ENCODE measurements at regions of chr14 and their contacts with region 1.

Region 1: GRCh38 chr14:59483900-59484638 is at the starts of genes JKAMP and L3HYPDH:
- DNase-seq: peak; percentile 93 to 99 (median 97)
- ATAC-seq: peak; percentile 95
- H3K4me3 ChIP-seq: peak within 1 kb of the TSS; percentile 94 to 99
- H3K4me3 Mint-ChIP-seq: peak within 1 kb of the TSS; percentile 96
- H3K27ac ChIP-seq: peak within 1 kb of the TSS; percentile 77 to 89
- H3K27ac Mint-ChIP-seq: peak within 1 kb of the TSS; percentile 88
- H3K4me1 ChIP-seq: peaks cover 46% of the 10 kb centered on the region
- H3K4me1 Mint-ChIP-seq: peaks cover 76% of the 10 kb centered on the region
- H3K27me3 ChIP-seq: no peaks in the 10 kb centered on the region
- H3K27me3 Mint-ChIP-seq: no peaks in the 10 kb centered on the region
- CTCF ChIP-seq: no peak
- total RNA-seq, gene JKAMP: 9.1 to 10.5 TPM
- total RNA-seq, gene L3HYPDH: 8.4 to 8.7 TPM

Region 2: DNA sequence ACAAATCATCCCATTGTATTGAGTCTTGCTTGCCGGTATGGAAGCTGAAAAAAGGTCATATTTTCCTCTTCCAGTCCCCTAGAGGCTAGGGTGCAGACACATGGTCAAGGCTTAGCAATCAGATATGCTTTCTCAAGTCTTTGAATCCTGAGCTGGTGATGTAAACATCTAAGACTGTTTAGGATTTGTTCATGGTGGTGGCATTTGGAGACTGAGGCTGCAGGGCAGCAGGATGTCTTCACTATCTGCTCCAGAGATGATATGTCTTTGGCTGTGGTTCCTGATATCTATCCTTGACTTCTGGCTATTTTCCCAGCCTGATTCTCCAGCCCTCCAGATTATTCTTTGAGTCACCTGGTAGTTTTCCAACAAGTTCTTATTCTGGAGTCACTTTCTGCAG is 896.8 kb before region 1 on chr14:
- CTCF ChIA-PET with region 1: no interaction called
- POLR2A ChIA-PET with region 1: no interaction called
- intact Hi-C with region 1: no loop called
- DNase-seq: no peak
- ATAC-seq: no peak
- H3K4me3 ChIP-seq: no peak overlapping the region
- H3K4me3 Mint-ChIP-seq: no peak overlapping the region
- H3K27ac ChIP-seq: no peak overlapping the region
- H3K27ac Mint-ChIP-seq: no peak overlapping the region
- H3K4me1 ChIP-seq: no peaks in the 10 kb centered on the region
- H3K4me1 Mint-ChIP-seq: no peaks in the 10 kb centered on the region
- H3K27me3 ChIP-seq: peaks cover 0 to 4% of the 10 kb centered on the region in 2 experiments
- H3K27me3 Mint-ChIP-seq: peaks cover 14% of the 10 kb centered on the region
- CTCF ChIP-seq: no peak

Region 3: GRCh38 chr14:59419303-59419702 is 64.8 kb before region 1 on chr14:
- CTCF ChIA-PET with region 1: no interaction called
- POLR2A ChIA-PET with region 1: no interaction called
- intact Hi-C with region 1: no loop called
- DNase-seq: no peak
- ATAC-seq: no peak
- H3K4me3 ChIP-seq: no peak overlapping the region
- H3K4me3 Mint-ChIP-seq: no peak overlapping the region
- H3K27ac ChIP-seq: no peak overlapping the region
- H3K27ac Mint-ChIP-seq: no peak overlapping the region
- H3K4me1 ChIP-seq: no peaks in the 10 kb centered on the region
- H3K4me1 Mint-ChIP-seq: no peaks in the 10 kb centered on the region
- H3K27me3 ChIP-seq: no peaks in the 10 kb centered on the region
- H3K27me3 Mint-ChIP-seq: no peaks in the 10 kb centered on the region
- CTCF ChIP-seq: no peak

Region 4: GRCh38 chr14:59464486-59465315 is 19.4 kb before region 1 on chr14:
- CTCF ChIA-PET with region 1: interaction called, 5 read pairs
- POLR2A ChIA-PET with region 1: interaction called, 29 read pairs
- intact Hi-C with region 1: loop called (anchors 1 kb)
- DNase-seq: peak; percentile 15 to 77 (median 55)
- ATAC-seq: peak; percentile 69
- H3K4me3 ChIP-seq: peak overlapping the region; percentile 50 to 56
- H3K4me3 Mint-ChIP-seq: peak overlapping the region; percentile 90
- H3K27ac ChIP-seq: peak overlapping the region in 1 of 2 experiments; percentile 42
- H3K27ac Mint-ChIP-seq: peak overlapping the region; percentile 58
- H3K4me1 ChIP-seq: peaks cover 9% of the 10 kb centered on the region
- H3K4me1 Mint-ChIP-seq: peaks cover 11% of the 10 kb centered on the region
- H3K27me3 ChIP-seq: no peaks in the 10 kb centered on the region
- H3K27me3 Mint-ChIP-seq: peaks cover 5% of the 10 kb centered on the region
- CTCF ChIP-seq: no peak

Region 5: GRCh38 chr14:59529189-59529588 is 45.1 kb after region 1 on chr14:
- CTCF ChIA-PET with region 1: no interaction called
- POLR2A ChIA-PET with region 1: no interaction called
- intact Hi-C with region 1: no loop called
- DNase-seq: no peak
- ATAC-seq: no peak
- H3K4me3 ChIP-seq: no peak overlapping the region
- H3K4me3 Mint-ChIP-seq: no peak overlapping the region
- H3K27ac ChIP-seq: no peak overlapping the region
- H3K27ac Mint-ChIP-seq: no peak overlapping the region
- H3K4me1 ChIP-seq: no peaks in the 10 kb centered on the region
- H3K4me1 Mint-ChIP-seq: no peaks in the 10 kb centered on the region
- H3K27me3 ChIP-seq: no peaks in the 10 kb centered on the region
- H3K27me3 Mint-ChIP-seq: peaks cover 18% of the 10 kb centered on the region
- CTCF ChIP-seq: no peak

Region 6: DNA sequence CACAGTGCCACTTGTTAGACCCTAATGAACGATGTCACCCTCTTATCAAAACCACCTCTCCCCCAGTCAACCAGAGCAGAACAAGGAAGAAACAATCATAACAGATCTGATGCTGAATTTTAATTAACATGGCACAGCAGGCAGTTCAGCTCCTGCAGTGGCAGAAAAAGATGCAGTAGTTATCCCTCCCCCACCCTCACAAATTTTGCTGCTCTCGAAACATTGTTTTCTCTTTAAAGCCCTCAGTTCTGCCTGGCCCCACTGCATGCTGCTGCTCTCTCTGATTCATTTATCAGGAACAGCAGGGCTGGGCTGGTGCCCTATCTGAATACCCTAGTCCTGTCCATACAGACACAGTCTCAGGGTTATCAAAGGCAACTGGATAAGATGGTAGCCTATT is 80.3 kb after region 1 on chr14:
- CTCF ChIA-PET with region 1: no interaction called
- POLR2A ChIA-PET with region 1: no interaction called
- intact Hi-C with region 1: no loop called
- DNase-seq: no peak
- ATAC-seq: no peak
- H3K4me3 ChIP-seq: no peak overlapping the region
- H3K4me3 Mint-ChIP-seq: no peak overlapping the region
- H3K27ac ChIP-seq: no peak overlapping the region
- H3K27ac Mint-ChIP-seq: no peak overlapping the region
- H3K4me1 ChIP-seq: no peaks in the 10 kb centered on the region
- H3K4me1 Mint-ChIP-seq: no peaks in the 10 kb centered on the region
- H3K27me3 ChIP-seq: peaks cover 0 to 3% of the 10 kb centered on the region in 2 experiments
- H3K27me3 Mint-ChIP-seq: peaks cover 10% of the 10 kb centered on the region
- CTCF ChIP-seq: no peak

Region 7: DNA sequence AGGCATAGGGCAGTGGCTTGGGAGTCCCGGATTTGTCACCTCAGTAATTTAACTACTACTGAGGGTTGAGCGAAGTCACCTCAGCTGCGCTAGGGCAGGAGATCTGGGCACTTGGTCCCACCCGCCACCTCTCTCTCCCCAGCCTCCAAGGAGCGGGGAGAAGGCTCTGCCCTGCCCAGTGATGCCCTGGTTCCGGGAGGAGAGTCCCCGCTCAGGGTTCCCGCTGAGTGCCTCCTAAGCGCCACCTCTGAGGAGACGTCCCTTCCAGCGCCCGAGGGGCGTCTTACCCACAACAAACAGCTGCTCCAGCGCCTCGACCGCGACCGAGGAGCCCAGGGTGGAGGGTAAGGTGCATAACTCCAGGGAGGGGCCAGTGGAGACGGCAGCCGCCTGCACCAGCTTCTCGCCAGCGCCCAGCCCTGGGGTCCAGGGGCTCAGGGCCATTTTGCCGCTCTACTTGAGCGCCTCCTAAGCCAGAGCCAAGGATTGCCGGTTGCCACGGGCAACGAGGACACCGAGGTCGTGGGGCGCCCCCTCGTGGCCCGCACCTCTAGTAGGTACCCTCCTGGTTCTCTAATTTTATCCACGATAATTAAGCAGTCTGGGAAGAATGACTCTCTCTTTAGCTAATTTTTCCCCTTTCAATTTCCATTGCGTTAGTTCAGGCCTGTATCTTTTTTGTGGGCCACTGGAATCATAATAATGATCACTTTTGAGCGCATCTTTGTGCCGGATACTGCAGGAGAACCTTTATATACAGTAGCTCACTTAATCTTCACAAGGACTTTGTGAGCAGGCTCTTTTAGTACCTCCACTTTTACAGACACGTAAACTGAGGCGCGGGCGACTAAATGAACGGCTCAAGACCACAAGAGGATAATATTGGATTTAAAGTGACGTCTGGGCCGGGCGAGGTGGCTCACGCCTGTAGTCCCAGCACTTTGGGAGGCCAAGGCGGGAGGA is 92.5 kb after region 1 on chr14 and contains the start of gene CCDC175:
- CTCF ChIA-PET with region 1: interaction called, 3 read pairs
- POLR2A ChIA-PET with region 1: interaction called, 3 read pairs
- intact Hi-C with region 1: loop called in 1 of 2 experiments (anchors 2 kb)
- DNase-seq: peak; percentile 50 to 89 (median 82)
- ATAC-seq: peak; percentile 98
- H3K4me3 ChIP-seq: peak within 1 kb of the TSS; percentile 55 to 58
- H3K4me3 Mint-ChIP-seq: peak within 1 kb of the TSS; percentile 72
- H3K27ac ChIP-seq: no peak within 1 kb of the TSS
- H3K27ac Mint-ChIP-seq: no peak within 1 kb of the TSS
- H3K4me1 ChIP-seq: peaks cover 9% of the 10 kb centered on the region
- H3K4me1 Mint-ChIP-seq: peaks cover 10% of the 10 kb centered on the region
- H3K27me3 ChIP-seq: peaks cover 0 to 4% of the 10 kb centered on the region in 2 experiments
- H3K27me3 Mint-ChIP-seq: peaks cover 27% of the 10 kb centered on the region
- CTCF ChIP-seq: peak; percentile 85
- total RNA-seq, gene CCDC175: not detected

Region 8: GRCh38 chr14:59964251-59965007 is 480.4 kb after region 1 on chr14:
- CTCF ChIA-PET with region 1: no interaction called
- POLR2A ChIA-PET with region 1: no interaction called
- intact Hi-C with region 1: loop called (anchors 5 to 10 kb)
- DNase-seq: peak in 2 of 9 experiments; percentile 24 to 47
- ATAC-seq: peak; percentile 34
- H3K4me3 ChIP-seq: peak overlapping the region in 1 of 2 experiments; percentile 52
- H3K4me3 Mint-ChIP-seq: peak overlapping the region; percentile 88
- H3K27ac ChIP-seq: no peak overlapping the region
- H3K27ac Mint-ChIP-seq: peak overlapping the region; percentile 95
- H3K4me1 ChIP-seq: peaks cover 12% of the 10 kb centered on the region
- H3K4me1 Mint-ChIP-seq: peaks cover 18% of the 10 kb centered on the region
- H3K27me3 ChIP-seq: no peaks in the 10 kb centered on the region
- H3K27me3 Mint-ChIP-seq: no peaks in the 10 kb centered on the region
- CTCF ChIP-seq: no peak

Region 9: DNA sequence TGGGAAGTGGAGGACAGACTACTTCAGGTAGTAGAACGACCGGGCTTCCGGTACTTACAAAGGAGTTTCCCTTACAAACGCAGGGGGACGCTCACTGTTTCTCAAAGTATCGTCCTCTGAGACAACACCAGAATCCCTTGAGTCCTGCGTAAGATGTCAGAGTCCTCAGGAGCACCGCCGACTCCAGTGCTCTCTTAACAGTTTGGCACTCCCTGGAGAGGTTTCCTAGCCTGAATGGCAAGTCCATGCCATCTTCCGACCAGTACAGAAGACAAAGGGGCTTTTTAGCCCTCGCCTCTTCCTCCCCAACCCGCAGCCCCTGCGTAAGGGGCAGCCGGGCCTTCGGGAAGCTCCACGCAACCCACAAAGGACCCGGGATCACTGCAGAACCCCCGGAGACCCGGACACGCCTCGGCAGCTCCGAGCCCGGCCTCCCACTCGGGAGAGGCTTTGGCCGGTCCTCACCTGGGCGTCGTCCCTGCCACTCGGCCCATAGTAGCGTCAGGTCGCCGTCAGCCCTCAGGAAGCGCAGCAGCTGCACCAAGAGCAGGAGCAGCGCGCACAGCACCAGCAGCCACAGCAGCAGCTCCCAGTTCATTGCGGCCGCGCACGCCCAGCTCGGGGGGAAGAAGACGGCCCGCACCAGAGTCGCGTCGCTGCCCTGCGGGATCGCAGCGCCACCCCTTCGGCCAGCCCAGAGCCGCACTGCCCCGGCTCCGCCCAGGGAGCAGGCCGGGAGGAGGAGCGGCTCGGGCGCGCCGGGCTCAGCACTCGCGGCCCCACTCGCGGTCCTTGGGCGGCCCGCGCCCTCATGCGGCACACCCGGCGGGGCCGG is 680.9 kb after region 1 on chr14 and contains the start of gene DHRS7:
- CTCF ChIA-PET with region 1: no interaction called
- POLR2A ChIA-PET with region 1: no interaction called
- intact Hi-C with region 1: loop called in 1 of 2 experiments (anchors 10 kb)
- DNase-seq: peak; percentile 28 to 89 (median 62)
- ATAC-seq: peak; percentile 70
- H3K4me3 ChIP-seq: peak within 1 kb of the TSS; percentile 68 to 88
- H3K4me3 Mint-ChIP-seq: peak within 1 kb of the TSS; percentile 99
- H3K27ac ChIP-seq: peak within 1 kb of the TSS; percentile 82 to 95
- H3K27ac Mint-ChIP-seq: peak within 1 kb of the TSS; percentile 100
- H3K4me1 ChIP-seq: peaks cover 31% of the 10 kb centered on the region
- H3K4me1 Mint-ChIP-seq: peaks cover 52% of the 10 kb centered on the region
- H3K27me3 ChIP-seq: no peaks in the 10 kb centered on the region
- H3K27me3 Mint-ChIP-seq: no peaks in the 10 kb centered on the region
- CTCF ChIP-seq: no peak
- total RNA-seq, gene DHRS7: 26.6 to 27.6 TPM

Region 10: DNA sequence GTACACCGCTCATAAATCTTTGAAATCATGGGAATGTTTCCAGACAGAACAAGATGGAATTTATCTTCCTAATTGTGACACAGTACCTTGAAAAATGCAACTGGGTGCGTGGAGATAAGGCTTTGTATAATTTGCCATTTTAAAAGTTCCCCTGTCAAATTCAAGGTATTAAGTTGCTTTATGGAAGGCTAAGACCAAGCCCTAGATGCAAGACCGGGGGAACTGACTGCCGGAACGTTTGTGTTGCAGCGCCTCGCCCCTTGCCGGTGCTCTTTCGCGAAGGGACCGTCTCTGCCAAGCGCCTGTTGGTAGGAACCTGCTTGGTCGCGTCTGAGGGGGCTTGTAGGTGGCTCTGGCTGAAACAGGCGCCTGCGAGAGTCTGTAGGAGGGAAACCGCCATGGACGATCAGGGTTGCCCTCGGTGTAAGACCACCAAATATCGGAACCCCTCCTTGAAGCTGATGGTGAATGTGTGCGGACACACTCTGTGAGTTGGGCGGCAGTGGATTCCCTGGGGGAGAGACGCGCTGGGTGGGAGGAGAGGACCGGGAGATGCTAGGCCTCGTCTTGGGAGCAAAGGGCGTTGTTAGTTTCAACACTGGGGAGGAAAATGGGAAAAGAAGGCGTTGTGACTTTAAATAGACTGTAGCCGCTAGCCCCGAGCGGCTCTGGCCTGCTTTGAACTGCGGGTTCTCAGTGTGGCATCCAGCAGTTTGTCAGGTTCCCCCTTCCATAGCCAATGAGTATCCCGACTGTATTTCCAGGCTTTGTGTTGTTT is 1250.6 kb after region 1 on chr14 and contains the start of gene MNAT1:
- CTCF ChIA-PET with region 1: no interaction called
- POLR2A ChIA-PET with region 1: no interaction called
- intact Hi-C with region 1: loop called (anchors 10 kb)
- DNase-seq: peak; percentile 62 to 88 (median 78)
- ATAC-seq: peak; percentile 98
- H3K4me3 ChIP-seq: peak within 1 kb of the TSS; percentile 83 to 84
- H3K4me3 Mint-ChIP-seq: peak within 1 kb of the TSS; percentile 100
- H3K27ac ChIP-seq: peak within 1 kb of the TSS; percentile 40 to 56
- H3K27ac Mint-ChIP-seq: peak within 1 kb of the TSS; percentile 95
- H3K4me1 ChIP-seq: peaks cover 19% of the 10 kb centered on the region
- H3K4me1 Mint-ChIP-seq: peaks cover 36% of the 10 kb centered on the region
- H3K27me3 ChIP-seq: no peaks in the 10 kb centered on the region
- H3K27me3 Mint-ChIP-seq: peaks cover 12% of the 10 kb centered on the region
- CTCF ChIP-seq: no peak
- total RNA-seq, gene MNAT1: 12.0 to 14.5 TPM

Region 11: GRCh38 chr14:60980811-60981632 is 1497.0 kb after region 1 on chr14 and contains the starts of genes SLC38A6 and TRMT5:
- CTCF ChIA-PET with region 1: no interaction called
- POLR2A ChIA-PET with region 1: no interaction called
- intact Hi-C with region 1: loop called (anchors 5 to 10 kb)
- DNase-seq: peak; percentile 79 to 94 (median 91)
- ATAC-seq: peak; percentile 88
- H3K4me3 ChIP-seq: peak within 1 kb of the TSS; percentile 94 to 98
- H3K4me3 Mint-ChIP-seq: no peak within 1 kb of the TSS
- H3K27ac ChIP-seq: peak within 1 kb of the TSS; percentile 90 to 92
- H3K27ac Mint-ChIP-seq: no peak within 1 kb of the TSS
- H3K4me1 ChIP-seq: peaks cover 23% of the 10 kb centered on the region
- H3K4me1 Mint-ChIP-seq: peaks cover 25% of the 10 kb centered on the region
- H3K27me3 ChIP-seq: no peaks in the 10 kb centered on the region
- H3K27me3 Mint-ChIP-seq: no peaks in the 10 kb centered on the region
- CTCF ChIP-seq: no peak
- total RNA-seq, gene SLC38A6: 8.3 to 8.5 TPM
- total RNA-seq, gene TRMT5: 1.8 to 1.9 TPM